PC-3 (cell line): ENCODE measurements at regions of chr21 and their contacts with region 1.

Region 1: GRCh38 chr21:38277501-38278131 is 20.8 kb downstream of the KCNJ15 start:
- DNase-seq: peak; percentile 95
- ATAC-seq: peak; percentile 93
- H3K4me3 ChIP-seq: no peak overlapping the region
- H3K27ac ChIP-seq: peak overlapping the region; percentile 94
- H3K4me1 ChIP-seq: peaks cover 21% of the 10 kb centered on the region
- H3K27me3 ChIP-seq: no peaks in the 10 kb centered on the region
- CTCF ChIP-seq: no peak

Region 2: GRCh38 chr21:36330904-36331303 is 1946.7 kb before region 1 on chr21:
- CTCF ChIA-PET with region 1: no interaction called
- POLR2A ChIA-PET with region 1: no interaction called
- intact Hi-C with region 1: no loop called
- DNase-seq: peak; percentile 62
- ATAC-seq: peak; percentile 86
- H3K4me3 ChIP-seq: no peak overlapping the region
- H3K27ac ChIP-seq: no peak overlapping the region
- H3K4me1 ChIP-seq: peaks cover 2% of the 10 kb centered on the region; the same call in 1 of the 2 replicates
- H3K27me3 ChIP-seq: no peaks in the 10 kb centered on the region
- CTCF ChIP-seq: peak; percentile 80

Region 3: DNA sequence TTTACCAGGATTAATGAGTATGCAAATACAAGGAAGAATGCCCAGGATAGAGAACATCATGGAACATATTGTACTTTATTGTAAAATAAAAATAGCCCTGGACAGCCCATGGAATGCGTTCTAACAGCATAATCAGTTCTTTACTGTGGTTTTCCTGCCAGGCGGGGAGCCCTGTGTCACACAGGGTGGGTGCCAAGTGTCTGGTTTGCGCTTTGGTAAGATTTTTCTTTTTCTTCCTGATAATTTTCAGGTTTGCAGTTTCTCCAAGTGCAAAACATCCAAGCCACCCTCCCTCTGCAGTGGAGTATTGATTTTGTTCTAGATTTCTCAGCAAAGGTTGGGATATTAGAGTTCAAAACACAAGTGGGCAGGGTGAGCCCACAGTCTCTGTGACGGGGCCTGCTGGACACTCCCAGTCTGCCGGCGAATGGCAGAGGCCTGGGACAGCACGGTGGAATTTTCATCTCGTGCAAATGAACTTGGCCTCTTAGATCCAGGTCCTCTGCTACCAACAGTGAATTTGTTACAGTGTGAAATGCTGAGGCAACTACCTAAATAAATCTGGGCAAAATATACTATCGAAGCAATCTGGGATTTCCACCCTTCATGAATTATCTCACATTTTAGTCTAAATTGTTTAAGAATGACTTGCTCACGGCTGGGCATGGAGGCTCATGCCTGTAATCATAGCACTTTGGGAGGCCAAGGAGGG is 36.4 kb before region 1 on chr21:
- CTCF ChIA-PET with region 1: no interaction called
- POLR2A ChIA-PET with region 1: no interaction called
- intact Hi-C with region 1: loop called (anchors 5 kb)
- DNase-seq: no peak
- ATAC-seq: no peak
- H3K4me3 ChIP-seq: no peak overlapping the region
- H3K27ac ChIP-seq: no peak overlapping the region
- H3K4me1 ChIP-seq: peaks cover 16% of the 10 kb centered on the region
- H3K27me3 ChIP-seq: no peaks in the 10 kb centered on the region
- CTCF ChIP-seq: no peak

Region 4: GRCh38 chr21:38303300-38303699 is 25.7 kb after region 1 on chr21:
- CTCF ChIA-PET with region 1: no interaction called
- POLR2A ChIA-PET with region 1: no interaction called
- intact Hi-C with region 1: loop called (anchors 2 kb)
- DNase-seq: peak; percentile 90
- ATAC-seq: peak; percentile 98
- H3K4me3 ChIP-seq: no peak overlapping the region
- H3K27ac ChIP-seq: peak overlapping the region; percentile 55
- H3K4me1 ChIP-seq: peaks cover 14% of the 10 kb centered on the region
- H3K27me3 ChIP-seq: no peaks in the 10 kb centered on the region
- CTCF ChIP-seq: no peak

Region 5: DNA sequence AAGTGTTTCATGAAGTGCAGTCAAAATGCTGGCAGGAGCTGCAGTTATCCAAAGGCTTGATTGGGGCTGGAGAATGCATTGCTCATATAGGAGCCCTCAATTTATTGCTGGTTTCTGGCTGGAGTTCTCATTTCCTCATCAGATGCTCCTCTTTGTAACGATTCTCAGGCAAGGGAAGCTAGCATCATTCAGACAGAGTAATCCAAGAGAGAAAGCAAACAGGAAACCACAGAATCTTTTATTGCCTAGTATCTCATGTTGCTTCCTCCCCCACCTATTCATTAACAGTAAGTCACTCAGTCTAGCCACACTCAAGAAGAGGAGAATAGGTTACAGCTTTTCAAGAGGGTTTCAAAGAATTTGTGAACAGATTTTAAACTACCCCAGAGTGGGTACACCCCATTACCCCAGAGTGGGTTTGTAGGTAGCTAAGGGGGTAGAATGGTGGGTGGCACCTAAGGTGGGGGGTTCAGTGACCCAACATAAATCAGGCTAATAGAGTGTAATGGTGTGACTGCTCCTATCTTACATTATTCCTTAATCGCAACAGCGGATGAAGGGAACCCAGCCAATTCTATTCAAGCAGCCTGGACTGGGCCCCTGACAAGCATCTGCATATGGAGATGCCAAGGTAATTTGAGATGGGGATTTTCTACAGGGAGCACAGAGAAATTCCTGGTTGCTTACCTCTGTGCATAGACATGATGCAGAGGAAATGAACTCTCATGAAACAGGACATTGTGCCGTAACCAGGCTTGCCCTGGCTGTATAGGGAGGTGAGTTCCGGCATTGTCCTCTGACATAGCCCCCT is 46.3 kb after region 1 on chr21:
- CTCF ChIA-PET with region 1: no interaction called
- POLR2A ChIA-PET with region 1: no interaction called
- intact Hi-C with region 1: loop called (anchors 1 kb)
- DNase-seq: peak; percentile 95
- ATAC-seq: peak; percentile 87
- H3K4me3 ChIP-seq: peak overlapping the region; percentile 28; the same call in 1 of the 2 replicates
- H3K27ac ChIP-seq: peak overlapping the region; percentile 99
- H3K4me1 ChIP-seq: peaks cover 28% of the 10 kb centered on the region
- H3K27me3 ChIP-seq: no peaks in the 10 kb centered on the region
- CTCF ChIP-seq: no peak

Region 6: DNA sequence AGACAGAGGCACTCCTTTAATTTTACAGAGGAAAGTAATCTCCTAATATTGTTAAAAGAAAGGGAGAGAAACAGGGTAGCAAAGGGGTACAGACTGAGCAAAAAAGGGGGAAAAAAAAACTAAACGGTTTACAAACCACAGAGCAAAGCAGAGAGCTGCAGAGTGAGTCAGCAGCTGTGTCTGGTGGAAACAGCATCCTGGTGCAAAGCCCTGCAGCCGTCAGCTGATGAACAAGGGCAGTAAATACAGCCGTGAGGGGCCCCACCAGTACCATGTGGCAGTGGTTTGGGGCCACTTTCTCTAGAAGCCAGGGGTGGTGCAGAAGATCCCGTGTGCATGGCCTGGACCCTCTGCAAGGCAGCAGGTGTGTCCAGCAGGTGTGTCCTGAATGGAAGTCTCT is 109.4 kb after region 1 on chr21:
- CTCF ChIA-PET with region 1: no interaction called
- POLR2A ChIA-PET with region 1: no interaction called
- intact Hi-C with region 1: no loop called
- DNase-seq: no peak
- ATAC-seq: no peak
- H3K4me3 ChIP-seq: no peak overlapping the region
- H3K27ac ChIP-seq: no peak overlapping the region
- H3K4me1 ChIP-seq: no peaks in the 10 kb centered on the region
- H3K27me3 ChIP-seq: peaks cover 88% of the 10 kb centered on the region
- CTCF ChIP-seq: no peak